PC-3 (cell line): ENCODE measurements at regions of chr1 and their contacts with region 1.

Region 1: GRCh38 chr1:12407050-12407961 is 177.5 kb downstream of the VPS13D start:
- DNase-seq: peak; percentile 90
- ATAC-seq: peak; percentile 97
- H3K4me3 ChIP-seq: no peak overlapping the region
- H3K27ac ChIP-seq: peak overlapping the region; percentile 60
- H3K4me1 ChIP-seq: peaks cover 31% of the 10 kb centered on the region
- H3K27me3 ChIP-seq: no peaks in the 10 kb centered on the region
- CTCF ChIP-seq: peak; percentile 78

Region 2: GRCh38 chr1:12344596-12345349 is 62.5 kb before region 1 on chr1:
- CTCF ChIA-PET with region 1: no interaction called
- POLR2A ChIA-PET with region 1: no interaction called
- intact Hi-C with region 1: no loop called
- DNase-seq: no peak
- ATAC-seq: no peak
- H3K4me3 ChIP-seq: no peak overlapping the region
- H3K27ac ChIP-seq: no peak overlapping the region
- H3K4me1 ChIP-seq: no peaks in the 10 kb centered on the region
- H3K27me3 ChIP-seq: no peaks in the 10 kb centered on the region
- CTCF ChIP-seq: no peak

Region 3: GRCh38 chr1:12380326-12381249 is 26.7 kb before region 1 on chr1:
- CTCF ChIA-PET with region 1: no interaction called
- POLR2A ChIA-PET with region 1: no interaction called
- intact Hi-C with region 1: loop called (anchors 1 kb)
- DNase-seq: peak; percentile 61
- ATAC-seq: peak; percentile 27
- H3K4me3 ChIP-seq: peak overlapping the region; percentile 39
- H3K27ac ChIP-seq: peak overlapping the region; percentile 99
- H3K4me1 ChIP-seq: peaks cover 54% of the 10 kb centered on the region
- H3K27me3 ChIP-seq: no peaks in the 10 kb centered on the region
- CTCF ChIP-seq: no peak

Region 4: GRCh38 chr1:12464598-12465056 is 57.3 kb after region 1 on chr1:
- CTCF ChIA-PET with region 1: no interaction called
- POLR2A ChIA-PET with region 1: no interaction called
- intact Hi-C with region 1: loop called (anchors 5 kb)
- DNase-seq: peak; percentile 95
- ATAC-seq: peak; percentile 98
- H3K4me3 ChIP-seq: no peak overlapping the region
- H3K27ac ChIP-seq: peak overlapping the region; percentile 73
- H3K4me1 ChIP-seq: peaks cover 49% of the 10 kb centered on the region
- H3K27me3 ChIP-seq: no peaks in the 10 kb centered on the region
- CTCF ChIP-seq: no peak

Region 5: DNA sequence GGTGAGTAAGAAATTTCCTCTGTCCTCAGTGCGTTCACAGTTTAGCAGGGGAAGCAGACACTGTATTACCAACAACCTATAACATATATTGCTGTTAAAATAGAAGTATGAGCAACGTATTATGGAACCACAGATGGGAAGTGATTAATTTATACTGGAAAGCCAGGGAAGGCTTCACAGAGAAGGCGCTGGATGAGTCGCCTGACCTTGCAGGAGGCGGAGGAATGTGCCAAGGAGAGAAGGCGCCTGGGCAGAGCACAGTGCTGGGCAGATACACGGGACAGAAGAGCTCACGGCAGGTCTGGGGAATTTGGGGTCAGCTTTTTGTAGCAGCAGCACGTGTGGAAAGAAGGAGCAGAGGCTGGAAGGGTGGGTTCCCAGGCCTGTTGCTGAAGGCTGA is 94.4 kb after region 1 on chr1:
- CTCF ChIA-PET with region 1: no interaction called
- POLR2A ChIA-PET with region 1: no interaction called
- intact Hi-C with region 1: loop called (anchors 1 kb)
- DNase-seq: peak; percentile 83
- ATAC-seq: peak; percentile 98
- H3K4me3 ChIP-seq: no peak overlapping the region
- H3K27ac ChIP-seq: peak overlapping the region; percentile 56
- H3K4me1 ChIP-seq: peaks cover 20% of the 10 kb centered on the region
- H3K27me3 ChIP-seq: no peaks in the 10 kb centered on the region
- CTCF ChIP-seq: no peak

Region 6: GRCh38 chr1:12549460-12550349 is 142.4 kb after region 1 on chr1:
- CTCF ChIA-PET with region 1: no interaction called
- POLR2A ChIA-PET with region 1: no interaction called
- intact Hi-C with region 1: loop called (anchors 1 kb)
- DNase-seq: peak; percentile 98
- ATAC-seq: peak; percentile 96
- H3K4me3 ChIP-seq: peak overlapping the region; percentile 25; the same call in 1 of the 2 replicates
- H3K27ac ChIP-seq: peak overlapping the region; percentile 81
- H3K4me1 ChIP-seq: peaks cover 18% of the 10 kb centered on the region
- H3K27me3 ChIP-seq: no peaks in the 10 kb centered on the region
- CTCF ChIP-seq: no peak